Right ventricle myocardium inferior (tissue), 1 donor: ENCODE measurements at regions of chr7 and their contacts with region 1.

Region 1: GRCh38 chr7:128841921-128842651 is 11.9 kb downstream of the FLNC start:
- DNase-seq: no peak
- ATAC-seq: peak; percentile 32

Region 2: DNA sequence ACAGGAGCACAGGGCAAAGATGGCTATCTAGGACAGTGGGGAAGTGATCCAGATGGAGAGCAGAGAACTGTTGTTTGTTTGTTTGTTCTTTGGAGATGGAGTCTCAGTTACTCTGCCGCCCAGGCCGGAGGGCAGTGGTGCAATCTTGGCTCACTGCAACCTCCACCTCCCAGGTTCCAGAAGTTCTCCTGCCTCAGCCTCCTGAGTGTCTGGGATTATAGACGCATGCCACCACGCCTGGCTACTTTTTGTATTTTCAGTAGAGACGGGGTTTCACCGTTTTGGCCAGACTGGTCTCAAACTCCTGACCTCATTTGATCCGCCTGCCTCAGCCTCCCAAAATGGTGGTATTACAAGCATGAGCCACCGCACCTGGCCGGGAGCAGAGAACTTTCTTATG is 344.7 kb before region 1 on chr7:
- intact Hi-C with region 1: no loop called
- DNase-seq: no peak
- ATAC-seq: no peak

Region 3: DNA sequence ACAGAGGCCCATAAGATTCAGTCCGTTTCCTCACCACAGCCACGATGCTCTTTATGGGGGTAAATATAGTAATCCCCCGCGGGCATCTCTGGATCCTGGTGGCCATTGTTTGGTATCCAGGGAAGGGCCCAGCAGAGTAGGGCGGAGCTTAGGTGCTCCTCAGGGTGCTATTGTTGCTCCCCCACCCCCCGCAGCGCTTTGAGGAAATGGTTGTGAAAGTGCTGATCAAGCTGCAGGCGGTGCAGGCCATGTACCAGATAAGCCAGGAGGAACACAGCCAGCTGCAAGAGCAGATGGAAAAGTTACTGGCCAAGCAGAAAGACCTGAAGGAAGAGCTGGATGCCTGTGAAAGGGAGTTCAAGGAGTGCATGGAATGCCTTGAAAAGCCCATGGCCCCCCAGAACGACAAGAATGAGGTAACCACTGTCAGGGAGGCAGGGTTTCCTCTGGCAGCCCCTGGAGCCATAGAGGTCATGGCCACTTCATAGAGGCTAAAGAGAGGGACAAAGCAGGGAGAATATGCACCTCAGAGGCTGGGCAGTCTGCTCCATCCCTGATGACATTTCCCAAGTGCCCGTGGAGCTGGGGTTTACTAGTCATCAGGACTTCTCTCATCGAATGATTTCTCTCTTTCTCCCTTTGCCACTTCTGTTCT is 29.4 kb before region 1 on chr7:
- intact Hi-C with region 1: loop called (anchors 1 kb)
- DNase-seq: peak; percentile 81
- ATAC-seq: peak; percentile 83

Region 4: GRCh38 chr7:129176916-129177710 is 335.0 kb after region 1 on chr7:
- intact Hi-C with region 1: no loop called
- DNase-seq: no peak
- ATAC-seq: no peak